MCF 10A (cell line): ENCODE measurements at regions of chr6 and their contacts with region 1.

Region 1: DNA sequence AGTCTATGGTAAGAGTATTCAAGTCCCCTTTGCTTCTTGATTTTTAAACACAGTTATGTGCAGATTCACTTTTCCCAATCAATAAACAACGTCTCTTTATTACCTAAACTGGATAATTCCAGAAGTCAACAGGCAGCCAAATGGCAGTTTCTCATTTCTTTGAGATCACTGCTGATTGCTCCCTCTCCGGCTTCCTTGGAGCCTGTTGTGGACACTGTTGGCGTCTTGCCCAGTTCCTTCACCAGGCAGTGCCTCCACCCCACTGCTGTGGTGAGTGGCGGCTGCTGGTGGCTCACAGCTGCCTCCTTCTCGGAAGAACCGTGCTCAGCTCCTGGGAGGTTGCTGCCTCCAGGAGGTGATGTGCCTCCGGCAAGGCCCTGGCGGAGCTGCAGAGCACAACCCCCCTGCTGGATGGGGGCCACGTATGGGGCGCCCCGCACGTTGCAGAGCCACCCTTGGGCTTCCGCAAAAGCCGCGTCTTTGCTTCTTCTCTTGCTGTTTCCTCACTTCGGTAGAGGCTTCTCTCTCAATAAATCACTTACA is 105.1 kb upstream of the CNKSR3 start:
- DNase-seq: peak; percentile 86
- H3K4me3 Mint-ChIP-seq: peak overlapping the region; percentile 17
- H3K27ac Mint-ChIP-seq: peak overlapping the region; percentile 28
- H3K4me1 Mint-ChIP-seq: peaks cover 12% of the 10 kb centered on the region
- H3K27me3 Mint-ChIP-seq: no peaks in the 10 kb centered on the region
- CTCF ChIP-seq: no peak

Region 2: GRCh38 chr6:154510143-154510905 is 105.2 kb before region 1 on chr6 and contains the start of gene CNKSR3:
- CTCF ChIA-PET with region 1: no interaction called
- POLR2A ChIA-PET with region 1: interaction called, 7 read pairs
- intact Hi-C with region 1: loop called (anchors 5 kb)
- DNase-seq: peak; percentile 92
- H3K4me3 Mint-ChIP-seq: peak within 1 kb of the TSS; percentile 87
- H3K27ac Mint-ChIP-seq: peak within 1 kb of the TSS; percentile 38
- H3K4me1 Mint-ChIP-seq: peaks cover 15% of the 10 kb centered on the region
- H3K27me3 Mint-ChIP-seq: no peaks in the 10 kb centered on the region
- CTCF ChIP-seq: no peak
- total RNA-seq, gene CNKSR3: 3.9 and 4.8 TPM in 2 replicates